MCF 10A (cell line): ENCODE measurements at regions of chr5 and their contacts with region 1.

Region 1: DNA sequence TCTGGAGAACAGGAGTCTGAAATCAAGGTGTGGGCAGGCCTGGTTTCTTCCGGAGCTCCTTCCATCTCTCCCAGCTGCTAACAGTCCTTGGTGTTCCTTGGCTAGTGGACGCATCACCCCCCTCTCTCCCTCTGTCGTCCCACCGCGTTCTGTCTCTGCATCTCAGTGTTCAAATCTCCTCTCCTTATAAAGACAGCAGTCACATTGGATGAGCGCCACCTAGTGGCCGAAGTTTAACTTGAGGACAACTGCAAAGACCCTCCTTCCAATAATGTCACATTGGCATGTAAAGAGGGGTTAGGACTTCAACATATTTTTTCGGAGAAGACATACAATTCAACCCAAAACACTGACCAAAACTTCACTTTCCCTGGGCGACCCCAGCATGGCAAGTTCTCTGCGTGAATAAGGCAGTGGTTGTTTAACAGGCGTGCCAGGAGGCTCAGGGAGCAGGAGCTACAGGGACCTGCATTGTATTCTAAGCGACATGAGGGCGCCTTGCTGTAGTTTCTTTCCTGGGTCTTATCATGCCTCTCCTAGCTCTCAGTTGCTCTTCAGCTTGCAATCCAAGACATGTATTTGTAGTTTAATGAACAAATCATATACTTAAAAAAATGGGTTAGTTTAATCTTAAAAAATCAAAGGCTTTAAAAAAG is 27.9 kb upstream of the BASP1 start:
- DNase-seq: peak; percentile 83
- H3K4me3 Mint-ChIP-seq: no peak overlapping the region
- H3K27ac Mint-ChIP-seq: no peak overlapping the region
- H3K4me1 Mint-ChIP-seq: peaks cover 29% of the 10 kb centered on the region
- H3K27me3 Mint-ChIP-seq: no peaks in the 10 kb centered on the region
- CTCF ChIP-seq: peak; percentile 87

Region 2: DNA sequence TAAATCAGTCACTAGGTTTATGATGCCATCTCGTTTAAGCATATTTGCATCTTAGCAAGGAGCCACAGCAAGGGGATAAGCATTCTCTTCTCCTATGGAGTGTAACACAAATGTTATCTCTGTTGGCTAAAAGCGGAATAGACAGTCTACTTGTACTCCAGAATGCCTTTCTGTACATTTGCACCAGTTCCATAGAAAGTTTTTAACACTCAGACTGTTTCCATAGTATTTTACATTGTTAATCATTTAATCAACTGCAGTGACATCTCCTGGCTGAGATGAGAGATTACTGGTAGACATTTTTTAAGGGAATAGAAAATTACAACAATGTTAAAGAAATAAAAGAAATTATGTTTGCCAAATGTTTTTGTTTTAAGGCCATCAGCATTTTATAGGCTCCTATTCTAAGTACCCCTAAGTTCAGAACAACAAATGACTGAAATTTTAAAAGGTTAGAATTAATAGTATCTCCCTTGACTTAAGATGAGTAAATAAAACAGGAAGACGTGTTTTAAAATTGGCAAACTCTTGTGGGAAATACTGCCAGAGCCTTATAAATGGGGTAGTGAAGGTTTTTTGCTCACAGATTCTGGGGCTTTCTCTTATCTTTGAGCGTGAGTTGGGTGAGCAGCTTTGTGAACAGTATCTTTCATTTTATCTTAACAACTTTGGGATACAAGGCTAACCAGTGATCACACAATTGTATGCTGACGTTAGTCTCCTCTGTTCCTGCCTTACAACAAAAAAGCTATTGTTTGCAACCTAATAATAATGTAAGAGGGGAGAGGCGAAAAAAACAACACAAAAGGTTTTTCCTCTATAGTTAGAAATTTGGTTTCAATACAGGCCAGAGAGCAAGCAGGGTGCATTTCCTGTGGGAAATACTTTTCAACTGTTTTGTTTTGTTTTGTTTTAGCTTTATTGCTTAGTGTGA is 1395.2 kb before region 1 on chr5:
- CTCF ChIA-PET with region 1: no interaction called
- POLR2A ChIA-PET with region 1: no interaction called
- intact Hi-C with region 1: no loop called
- DNase-seq: no peak
- H3K4me3 Mint-ChIP-seq: no peak overlapping the region
- H3K27ac Mint-ChIP-seq: no peak overlapping the region
- H3K4me1 Mint-ChIP-seq: no peaks in the 10 kb centered on the region
- H3K27me3 Mint-ChIP-seq: peaks cover 12% of the 10 kb centered on the region
- CTCF ChIP-seq: peak; percentile 35

Region 3: DNA sequence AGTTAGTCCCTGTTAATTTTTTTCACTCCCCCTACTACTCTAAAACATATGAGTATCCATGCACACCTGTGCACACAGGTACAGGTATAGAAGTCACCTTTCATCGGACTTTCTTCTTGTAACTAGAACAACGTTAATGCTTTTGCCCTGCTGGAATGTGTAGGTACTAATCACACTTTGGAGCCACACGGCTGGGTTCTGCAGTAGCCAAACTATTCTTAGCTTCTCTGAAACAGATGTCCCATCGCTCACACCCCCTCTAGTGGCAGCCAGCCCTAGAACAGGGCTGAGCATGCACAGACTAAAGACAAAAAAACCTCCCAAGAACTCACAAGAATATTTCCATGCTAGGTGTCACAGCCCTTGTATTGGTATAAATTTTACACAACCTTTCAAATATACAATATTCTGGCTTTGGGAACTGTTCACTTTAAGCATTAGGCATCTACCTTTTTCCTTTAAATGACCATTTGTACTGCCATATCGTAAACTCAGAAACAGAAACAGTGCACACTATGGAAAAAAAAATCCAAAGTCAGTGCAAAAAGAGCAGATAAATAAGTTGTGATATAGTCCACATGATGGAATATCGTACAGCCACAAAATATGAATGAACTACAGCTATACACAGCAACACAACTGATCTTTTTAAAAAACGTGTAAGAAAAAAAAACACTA is 636.7 kb before region 1 on chr5:
- CTCF ChIA-PET with region 1: interaction called, 3 read pairs
- POLR2A ChIA-PET with region 1: no interaction called
- intact Hi-C with region 1: loop called (anchors 5 kb)
- DNase-seq: peak; percentile 70
- H3K4me3 Mint-ChIP-seq: no peak overlapping the region
- H3K27ac Mint-ChIP-seq: no peak overlapping the region
- H3K4me1 Mint-ChIP-seq: peaks cover 16% of the 10 kb centered on the region
- H3K27me3 Mint-ChIP-seq: no peaks in the 10 kb centered on the region
- CTCF ChIP-seq: peak; percentile 68

Region 4: DNA sequence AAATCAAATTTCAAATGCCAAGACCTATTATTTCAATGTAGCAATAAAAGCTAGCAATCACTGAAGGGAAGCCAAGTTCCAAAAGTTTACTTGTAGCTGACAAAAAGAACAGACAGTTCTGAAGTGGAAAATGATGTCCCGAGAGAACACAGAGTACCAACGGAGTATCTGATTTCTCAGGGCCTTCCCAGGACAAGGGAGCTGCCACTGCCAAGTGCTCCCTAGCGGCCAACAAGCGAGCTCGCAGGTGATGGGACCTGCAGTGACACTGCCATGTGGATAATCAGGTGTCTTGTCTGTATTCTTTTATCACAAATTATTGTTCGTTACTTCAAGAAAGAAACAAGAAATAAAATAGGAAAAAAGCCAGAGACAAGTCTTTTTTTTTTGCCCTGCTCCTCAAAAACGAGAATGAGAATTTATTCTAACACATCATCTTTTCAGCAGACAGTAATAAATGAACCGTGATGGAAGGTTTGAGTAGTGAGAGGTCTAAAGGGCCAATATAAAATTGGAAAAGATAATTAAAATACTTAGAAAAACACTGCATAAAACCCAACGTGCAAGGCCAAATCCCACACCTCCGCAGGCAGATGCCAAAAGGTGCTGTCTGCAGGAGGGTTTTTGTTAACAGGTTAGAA is 412.8 kb before region 1 on chr5:
- CTCF ChIA-PET with region 1: interaction called, 16 read pairs
- POLR2A ChIA-PET with region 1: no interaction called
- intact Hi-C with region 1: no loop called
- DNase-seq: no peak
- H3K4me3 Mint-ChIP-seq: no peak overlapping the region
- H3K27ac Mint-ChIP-seq: no peak overlapping the region
- H3K4me1 Mint-ChIP-seq: no peaks in the 10 kb centered on the region
- H3K27me3 Mint-ChIP-seq: no peaks in the 10 kb centered on the region
- CTCF ChIP-seq: no peak

Region 5: GRCh38 chr5:16812911-16813310 is 376.6 kb before region 1 on chr5:
- CTCF ChIA-PET with region 1: interaction called, 18 read pairs
- POLR2A ChIA-PET with region 1: no interaction called
- intact Hi-C with region 1: no loop called
- DNase-seq: peak; percentile 69
- H3K4me3 Mint-ChIP-seq: no peak overlapping the region
- H3K27ac Mint-ChIP-seq: peak overlapping the region; percentile 38
- H3K4me1 Mint-ChIP-seq: peaks cover 35% of the 10 kb centered on the region
- H3K27me3 Mint-ChIP-seq: no peaks in the 10 kb centered on the region
- CTCF ChIP-seq: no peak

Region 6: DNA sequence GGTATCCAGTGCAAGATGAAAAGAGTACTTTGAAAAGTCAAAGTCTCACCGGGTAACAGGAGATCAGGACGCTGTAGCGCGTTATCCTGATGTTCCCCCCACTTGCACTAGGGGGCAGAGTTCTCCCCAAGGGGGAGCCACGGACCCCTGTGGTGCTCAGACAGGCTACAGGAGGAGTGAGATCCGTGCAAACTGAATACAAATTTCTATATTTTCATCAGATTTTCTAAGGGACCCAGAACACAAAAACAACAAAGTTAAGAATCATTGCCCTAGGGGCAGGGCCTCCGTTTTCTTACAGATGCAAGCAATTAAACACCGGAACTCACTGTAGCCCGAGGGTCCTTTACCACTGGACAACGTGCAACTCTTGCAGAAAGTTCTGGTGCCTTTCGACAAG is 255.4 kb before region 1 on chr5:
- CTCF ChIA-PET with region 1: interaction called, 119 read pairs
- POLR2A ChIA-PET with region 1: interaction called, 7 read pairs
- intact Hi-C with region 1: loop called (anchors 1 kb)
- DNase-seq: peak; percentile 80
- H3K4me3 Mint-ChIP-seq: peak overlapping the region; percentile 82
- H3K27ac Mint-ChIP-seq: no peak overlapping the region
- H3K4me1 Mint-ChIP-seq: peaks cover 34% of the 10 kb centered on the region
- H3K27me3 Mint-ChIP-seq: peaks cover 15% of the 10 kb centered on the region
- CTCF ChIP-seq: peak; percentile 90

Region 7: DNA sequence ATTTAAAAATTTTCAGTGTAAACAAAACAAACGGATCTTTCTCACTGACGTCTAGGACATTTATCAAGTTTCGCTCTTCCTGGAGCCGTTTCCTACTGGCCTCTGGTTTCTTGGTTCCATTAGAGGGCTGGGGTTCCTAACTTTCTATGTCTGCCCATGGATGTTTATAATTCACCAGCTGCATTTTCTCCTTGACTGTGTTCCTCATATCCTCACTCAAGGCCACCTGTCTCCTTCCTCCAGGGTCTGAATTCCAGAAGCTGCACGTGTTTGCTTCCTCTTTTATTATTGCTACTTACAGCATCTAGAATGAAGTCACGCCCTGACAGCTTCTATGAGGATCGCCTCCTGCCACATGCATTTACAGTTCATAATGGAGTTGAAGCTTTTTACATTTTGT is 46.2 kb before region 1 on chr5:
- CTCF ChIA-PET with region 1: interaction called, 24 read pairs
- POLR2A ChIA-PET with region 1: no interaction called
- intact Hi-C with region 1: no loop called
- DNase-seq: no peak
- H3K4me3 Mint-ChIP-seq: no peak overlapping the region
- H3K27ac Mint-ChIP-seq: no peak overlapping the region
- H3K4me1 Mint-ChIP-seq: peaks cover 13% of the 10 kb centered on the region
- H3K27me3 Mint-ChIP-seq: no peaks in the 10 kb centered on the region
- CTCF ChIP-seq: no peak

Region 8: GRCh38 chr5:17343675-17344074 is 154.2 kb after region 1 on chr5:
- CTCF ChIA-PET with region 1: no interaction called
- POLR2A ChIA-PET with region 1: no interaction called
- intact Hi-C with region 1: no loop called
- DNase-seq: peak; percentile 89
- H3K4me3 Mint-ChIP-seq: no peak overlapping the region
- H3K27ac Mint-ChIP-seq: peak overlapping the region; percentile 78
- H3K4me1 Mint-ChIP-seq: peaks cover 12% of the 10 kb centered on the region
- H3K27me3 Mint-ChIP-seq: no peaks in the 10 kb centered on the region
- CTCF ChIP-seq: no peak

Region 9: GRCh38 chr5:17679597-17680187 is 490.2 kb after region 1 on chr5:
- CTCF ChIA-PET with region 1: no interaction called
- POLR2A ChIA-PET with region 1: no interaction called
- intact Hi-C with region 1: no loop called
- DNase-seq: peak; percentile 55
- H3K4me3 Mint-ChIP-seq: no peak overlapping the region
- H3K27ac Mint-ChIP-seq: no peak overlapping the region
- H3K4me1 Mint-ChIP-seq: no peaks in the 10 kb centered on the region
- H3K27me3 Mint-ChIP-seq: no peaks in the 10 kb centered on the region
- CTCF ChIP-seq: no peak